HEK293 (cell line): ENCODE measurements at regions of chr16 and their contacts with region 1.

Region 1: DNA sequence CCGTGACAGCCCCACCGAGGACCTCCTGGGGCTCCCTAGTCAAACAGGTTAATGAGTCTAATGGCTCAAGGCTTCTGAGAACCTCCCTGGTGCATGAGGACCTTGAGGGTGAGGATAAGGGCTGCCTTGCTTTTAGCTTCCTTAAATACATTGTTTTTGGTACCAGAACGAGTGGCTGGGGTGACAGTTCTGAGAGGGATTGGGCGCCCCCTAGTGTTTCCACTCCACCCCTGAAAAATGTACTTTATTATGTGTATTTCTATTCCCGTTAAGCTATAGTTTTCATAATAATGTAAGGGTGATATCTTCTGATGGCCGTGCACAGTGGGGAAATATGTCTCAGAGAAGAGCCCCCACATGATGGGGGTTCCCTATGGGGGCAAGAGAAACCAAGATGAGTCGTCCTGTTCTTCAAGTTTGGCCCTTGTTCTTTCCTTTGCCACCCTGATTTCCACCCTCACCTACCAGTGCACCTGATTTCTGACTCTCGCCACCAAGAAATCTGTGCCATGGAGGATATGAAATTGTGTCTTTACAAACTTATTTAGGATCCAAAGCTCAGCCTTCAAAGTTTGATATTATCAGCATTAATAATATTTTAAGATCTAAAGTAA is 14.5 kb upstream of the VWA3A start:
- H3K4me3 ChIP-seq: no peak overlapping the region
- H3K27ac ChIP-seq: no peak overlapping the region
- H3K4me1 ChIP-seq: no peaks in the 10 kb centered on the region
- CTCF ChIP-seq: peak; percentile 32

Region 2: GRCh38 chr16:21989133-21989532 is 88.7 kb before region 1 on chr16:
- CTCF ChIA-PET with region 1: interaction called, 302 read pairs
- POLR2A ChIA-PET with region 1: no interaction called
- H3K4me3 ChIP-seq: no peak overlapping the region
- H3K27ac ChIP-seq: no peak overlapping the region
- H3K4me1 ChIP-seq: peaks cover 13% of the 10 kb centered on the region
- CTCF ChIP-seq: no peak

Region 3: GRCh38 chr16:22016927-22017326 is 60.9 kb before region 1 on chr16:
- CTCF ChIA-PET with region 1: interaction called, 302 read pairs
- POLR2A ChIA-PET with region 1: no interaction called
- H3K4me3 ChIP-seq: no peak overlapping the region
- H3K27ac ChIP-seq: no peak overlapping the region
- H3K4me1 ChIP-seq: peaks cover 18% of the 10 kb centered on the region
- CTCF ChIP-seq: no peak

Region 4: DNA sequence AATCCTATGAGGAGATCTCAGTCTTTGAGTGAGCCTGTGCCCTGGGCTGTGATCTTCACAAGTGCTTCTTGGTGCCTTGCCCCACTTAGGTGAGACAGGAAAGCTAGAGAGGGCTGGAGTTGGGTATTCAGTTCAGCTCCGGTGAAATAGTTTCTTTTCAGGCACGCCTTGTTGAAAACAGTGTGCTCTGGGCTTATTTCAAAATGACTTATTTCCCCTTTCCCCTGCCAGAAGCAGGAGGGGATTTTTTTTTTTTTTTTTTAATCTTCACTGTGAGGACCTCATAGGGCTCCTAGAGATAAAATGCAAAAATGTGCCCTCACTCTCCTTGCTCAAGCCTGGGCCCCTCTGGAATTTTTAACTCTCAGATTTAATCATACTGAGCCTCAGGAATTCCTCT is 42.7 kb before region 1 on chr16:
- CTCF ChIA-PET with region 1: interaction called, 23 read pairs
- POLR2A ChIA-PET with region 1: no interaction called
- H3K4me3 ChIP-seq: no peak overlapping the region
- H3K27ac ChIP-seq: no peak overlapping the region
- H3K4me1 ChIP-seq: 0 out of 2 replicates have a peak, but pooled peaks cover 5% of the 10 kb centered on the region
- CTCF ChIP-seq: no peak

Region 5: GRCh38 chr16:22063888-22064467 is 13.8 kb before region 1 on chr16:
- CTCF ChIA-PET with region 1: interaction called, 56 read pairs
- POLR2A ChIA-PET with region 1: no interaction called
- H3K4me3 ChIP-seq: no peak overlapping the region
- H3K27ac ChIP-seq: no peak overlapping the region
- H3K4me1 ChIP-seq: peaks cover 8% of the 10 kb centered on the region; the same call in 1 of the 2 replicates
- CTCF ChIP-seq: no peak

Region 6: GRCh38 chr16:22098405-22099255 is 20.8 kb after region 1 on chr16:
- CTCF ChIA-PET with region 1: interaction called, 31 read pairs
- POLR2A ChIA-PET with region 1: no interaction called
- H3K4me3 ChIP-seq: no peak overlapping the region
- H3K27ac ChIP-seq: no peak overlapping the region
- H3K4me1 ChIP-seq: no peaks in the 10 kb centered on the region
- CTCF ChIP-seq: peak; percentile 84

Region 7: GRCh38 chr16:22132766-22133165 is 55.0 kb after region 1 on chr16:
- CTCF ChIA-PET with region 1: no interaction called
- POLR2A ChIA-PET with region 1: no interaction called
- H3K4me3 ChIP-seq: no peak overlapping the region
- H3K27ac ChIP-seq: no peak overlapping the region
- H3K4me1 ChIP-seq: no peaks in the 10 kb centered on the region
- CTCF ChIP-seq: no peak

Region 8: DNA sequence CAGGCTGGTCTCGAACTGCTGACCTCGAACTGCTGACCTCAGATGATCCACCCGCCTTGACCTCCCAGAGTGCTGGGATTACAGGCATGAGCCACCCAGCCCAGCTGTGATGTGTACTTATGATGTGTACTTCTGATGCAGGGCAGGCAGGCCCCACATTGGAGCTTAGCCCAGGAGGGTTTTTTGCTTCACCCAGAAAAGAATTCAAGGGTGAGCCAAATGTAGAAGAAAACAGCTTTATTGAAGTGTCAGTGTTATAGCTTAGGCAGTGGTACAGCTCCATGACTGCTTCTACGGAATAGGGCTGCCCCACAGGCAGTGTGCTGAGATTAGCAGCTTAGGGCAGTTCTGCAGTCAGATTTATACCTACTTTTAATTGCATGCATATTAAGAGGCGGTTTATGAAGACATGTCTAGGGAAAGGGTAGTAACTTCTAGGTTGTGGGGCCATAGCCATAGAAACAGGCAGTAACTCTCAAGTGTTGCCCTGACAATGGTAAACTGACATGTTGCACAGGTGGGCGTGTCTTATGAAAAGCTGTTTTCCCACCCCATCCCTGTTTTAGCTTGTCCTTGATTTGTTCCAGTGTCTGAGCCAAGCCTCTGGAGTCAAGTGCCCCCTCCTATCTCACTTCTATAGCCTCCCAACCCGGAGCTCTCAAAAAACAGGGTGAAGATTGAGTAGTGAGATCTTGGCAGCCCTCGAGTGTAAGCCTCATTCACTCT is 195.2 kb after region 1 on chr16:
- CTCF ChIA-PET with region 1: no interaction called
- POLR2A ChIA-PET with region 1: no interaction called
- H3K4me3 ChIP-seq: no peak overlapping the region
- H3K27ac ChIP-seq: no peak overlapping the region
- H3K4me1 ChIP-seq: no peaks in the 10 kb centered on the region
- CTCF ChIP-seq: no peak